PC-9 (cell line): ENCODE measurements at regions of chr17 and their contacts with region 1.

Region 1: DNA sequence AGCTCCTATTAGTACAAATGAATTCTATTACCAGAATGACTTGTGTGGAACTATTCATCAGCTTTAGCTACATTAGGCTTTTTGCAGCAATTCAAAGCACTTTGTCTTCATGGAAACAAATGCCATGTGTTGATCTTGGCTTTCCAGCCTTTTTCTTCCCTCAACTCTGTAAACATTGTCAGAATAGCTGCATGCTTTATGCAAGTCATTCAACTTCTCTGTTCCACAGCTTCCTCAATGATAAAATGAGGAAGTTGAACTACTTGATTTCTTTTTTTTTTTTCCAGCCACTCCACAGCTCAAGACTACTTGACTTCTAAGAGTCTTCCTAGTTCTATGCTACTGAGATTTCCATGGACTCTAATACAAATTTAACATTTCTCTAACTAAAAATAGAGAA is 41.1 kb downstream of the KIAA0753 start:
- DNase-seq: peak in 1 of 2 experiments; percentile 53
- H3K4me3 ChIP-seq: no peak overlapping the region
- H3K27ac ChIP-seq: no peak overlapping the region
- H3K4me1 ChIP-seq: no peaks in the 10 kb centered on the region
- H3K27me3 ChIP-seq: no peaks in the 10 kb centered on the region
- CTCF ChIP-seq: no peak

Region 2: GRCh38 chr17:6583411-6583810 is 16.0 kb before region 1 on chr17:
- CTCF ChIA-PET with region 1: no interaction called
- POLR2A ChIA-PET with region 1: no interaction called
- intact Hi-C with region 1: loop called (anchors 2 kb)
- DNase-seq: no peak
- H3K4me3 ChIP-seq: no peak overlapping the region
- H3K27ac ChIP-seq: no peak overlapping the region
- H3K4me1 ChIP-seq: no peaks in the 10 kb centered on the region
- H3K27me3 ChIP-seq: no peaks in the 10 kb centered on the region
- CTCF ChIP-seq: no peak

Region 3: DNA sequence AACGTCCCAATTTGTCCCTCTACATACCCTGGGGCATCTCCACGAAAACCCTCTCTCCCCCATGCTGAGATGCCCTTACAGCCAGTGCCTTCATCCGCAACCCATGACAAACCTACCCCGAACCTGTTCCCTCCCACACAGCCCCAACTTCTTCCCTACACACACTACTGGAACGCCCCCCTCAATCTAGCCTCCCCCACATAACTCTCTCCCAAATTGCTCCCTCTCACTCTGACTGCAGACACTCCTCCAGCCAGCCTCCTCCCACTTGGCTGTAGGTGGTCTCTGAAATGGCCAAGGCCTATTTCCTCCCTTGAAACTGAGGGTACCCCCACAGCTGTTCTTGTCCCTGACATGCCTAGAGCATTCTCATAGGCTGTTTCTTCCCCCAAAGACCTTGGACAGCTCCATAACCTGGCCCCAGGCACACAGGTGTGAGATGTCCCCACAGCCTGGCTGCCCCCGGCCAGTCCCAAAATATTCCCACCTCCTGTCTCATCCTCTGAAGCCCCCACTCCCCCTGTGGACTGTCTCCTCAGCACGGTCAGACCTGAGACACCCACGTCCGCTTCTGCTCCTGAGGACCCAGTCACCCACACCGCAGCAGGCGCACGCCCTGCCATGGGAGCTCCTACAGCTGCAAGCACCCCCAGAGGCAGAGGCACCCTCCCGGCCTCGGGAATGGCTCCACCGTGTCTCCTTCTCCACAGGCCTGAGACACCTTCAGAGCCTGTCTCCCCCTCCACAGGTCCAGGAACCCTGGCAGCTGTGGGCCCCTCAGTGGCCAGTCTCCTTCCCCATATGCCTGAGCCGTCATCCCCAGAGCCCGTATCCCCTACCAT is 37.5 kb after region 1 on chr17:
- CTCF ChIA-PET with region 1: no interaction called
- POLR2A ChIA-PET with region 1: no interaction called
- intact Hi-C with region 1: no loop called
- DNase-seq: no peak
- H3K4me3 ChIP-seq: no peak overlapping the region
- H3K27ac ChIP-seq: no peak overlapping the region
- H3K4me1 ChIP-seq: peaks cover 9% of the 10 kb centered on the region
- H3K27me3 ChIP-seq: no peaks in the 10 kb centered on the region
- CTCF ChIP-seq: no peak

Region 4: DNA sequence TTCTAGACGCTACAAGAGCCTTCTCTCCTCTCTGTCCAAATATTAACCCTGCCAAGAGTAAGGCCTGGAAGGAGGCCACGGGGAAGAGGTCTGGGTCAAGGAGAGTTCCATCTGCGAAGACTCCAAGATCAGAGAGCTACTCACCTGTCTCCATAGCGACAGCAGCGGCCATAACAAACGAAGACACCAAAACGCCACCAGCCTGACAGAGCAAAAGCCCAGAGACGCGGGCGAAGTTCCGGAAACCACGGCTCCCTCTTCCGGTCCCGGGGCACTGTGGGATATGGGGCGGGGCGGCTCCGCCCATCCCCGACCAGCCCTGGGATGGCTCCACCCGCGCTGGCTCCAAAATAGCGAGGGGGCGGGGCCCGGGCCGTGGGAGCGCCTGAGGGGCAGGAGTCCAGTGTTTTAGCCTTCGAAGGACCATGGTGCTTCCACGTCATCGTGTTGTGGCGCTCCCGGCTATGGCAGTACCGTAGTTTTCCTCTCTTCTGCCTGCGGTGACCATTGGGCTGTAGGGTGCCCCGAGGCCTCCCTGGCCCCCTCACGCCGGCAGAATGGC is 52.1 kb after region 1 on chr17 and contains the starts of genes C17orf100 and MED31:
- CTCF ChIA-PET with region 1: no interaction called
- POLR2A ChIA-PET with region 1: no interaction called
- intact Hi-C with region 1: no loop called
- DNase-seq: peak; percentile 89 to 98
- H3K4me3 ChIP-seq: peak within 1 kb of the TSS; percentile 78
- H3K27ac ChIP-seq: peak within 1 kb of the TSS; percentile 72
- H3K4me1 ChIP-seq: peaks cover 37% of the 10 kb centered on the region
- H3K27me3 ChIP-seq: no peaks in the 10 kb centered on the region
- CTCF ChIP-seq: no peak
- total RNA-seq, gene C17orf100: 2.3 and 4.4 TPM in 2 replicates
- total RNA-seq, gene MED31: 19.2 and 41.4 TPM in 2 replicates

Region 5: DNA sequence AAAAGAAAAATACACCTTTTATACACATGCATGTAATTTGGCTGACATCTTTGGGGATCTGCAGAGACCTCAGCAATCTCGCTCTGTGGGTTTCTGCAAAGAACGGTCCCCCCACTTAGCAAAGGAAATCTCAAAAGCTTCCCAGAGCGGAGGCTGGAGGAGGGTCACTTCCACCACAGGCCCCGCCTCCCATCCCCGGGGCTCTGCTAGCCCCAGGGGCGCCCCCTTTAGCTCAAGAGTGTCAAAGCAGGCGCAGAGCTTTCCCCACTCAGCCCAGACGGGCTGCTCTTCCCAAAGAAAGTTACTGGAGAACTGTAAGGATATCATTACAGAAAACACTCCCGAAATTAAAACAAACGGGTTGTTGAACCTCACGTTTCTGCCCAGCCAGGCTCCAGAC is 102.4 kb after region 1 on chr17:
- CTCF ChIA-PET with region 1: no interaction called
- POLR2A ChIA-PET with region 1: no interaction called
- intact Hi-C with region 1: no loop called
- DNase-seq: peak; percentile 18 to 35
- H3K4me3 ChIP-seq: no peak overlapping the region
- H3K27ac ChIP-seq: no peak overlapping the region
- H3K4me1 ChIP-seq: peaks cover 10% of the 10 kb centered on the region
- H3K27me3 ChIP-seq: no peaks in the 10 kb centered on the region
- CTCF ChIP-seq: peak; percentile 53; the same call in 1 of the 2 replicates